ENCODE measurements at regions of chr5 and their contacts with region 1.

Region 1: GRCh38 chr5:72307968-72308852 is 11.8 kb downstream of the MRPS27 start:
- DNase-seq: peak; percentile 97
- ATAC-seq: peak; percentile 99
- H3K4me3 ChIP-seq: peak overlapping the region; percentile 58
- H3K27ac ChIP-seq: peak overlapping the region; percentile 58
- H3K4me1 ChIP-seq: no peaks in the 10 kb centered on the region; the same call in 1 of the 2 replicates
- H3K27me3 ChIP-seq: no peaks in the 10 kb centered on the region
- CTCF ChIP-seq: peak; percentile 95
- POLR2A ChIP-seq: peak; percentile 90
- RAD21 ChIP-seq: peak; percentile 90

Region 2: GRCh38 chr5:71586941-71587765 is 721.1 kb before region 1 on chr5 and contains the start of gene MCCC2:
- CTCF ChIA-PET with region 1: no interaction called
- POLR2A ChIA-PET with region 1: no interaction called
- dilution Hi-C with region 1: no loop called
- in situ Hi-C with region 1: loop called (anchors 25 kb)
- intact Hi-C with region 1: loop called (anchors 5 kb)
- DNase-seq: peak; percentile 92
- ATAC-seq: peak; percentile 100
- H3K4me3 ChIP-seq: peak within 1 kb of the TSS; percentile 76
- H3K27ac ChIP-seq: peak within 1 kb of the TSS; percentile 73
- H3K4me1 ChIP-seq: peaks cover 2% of the 10 kb centered on the region; the same call in 1 of the 2 replicates
- H3K27me3 ChIP-seq: no peaks in the 10 kb centered on the region
- CTCF ChIP-seq: no peak
- POLR2A ChIP-seq: peak; percentile 67; the same call in 1 of the 2 replicates
- RAD21 ChIP-seq: no peak
- total RNA-seq, gene MCCC2: 14.2 and 22.0 TPM in 2 replicates

Region 3: GRCh38 chr5:71939452-71940230 is 368.6 kb before region 1 on chr5:
- CTCF ChIA-PET with region 1: no interaction called
- POLR2A ChIA-PET with region 1: no interaction called
- dilution Hi-C with region 1: no loop called
- in situ Hi-C with region 1: no loop called
- intact Hi-C with region 1: loop called (anchors 10 kb)
- DNase-seq: no peak
- ATAC-seq: no peak
- H3K4me3 ChIP-seq: no peak overlapping the region
- H3K27ac ChIP-seq: no peak overlapping the region
- H3K4me1 ChIP-seq: no peaks in the 10 kb centered on the region
- H3K27me3 ChIP-seq: peaks cover 32% of the 10 kb centered on the region
- CTCF ChIP-seq: no peak
- POLR2A ChIP-seq: no peak
- RAD21 ChIP-seq: no peak

Region 4: DNA sequence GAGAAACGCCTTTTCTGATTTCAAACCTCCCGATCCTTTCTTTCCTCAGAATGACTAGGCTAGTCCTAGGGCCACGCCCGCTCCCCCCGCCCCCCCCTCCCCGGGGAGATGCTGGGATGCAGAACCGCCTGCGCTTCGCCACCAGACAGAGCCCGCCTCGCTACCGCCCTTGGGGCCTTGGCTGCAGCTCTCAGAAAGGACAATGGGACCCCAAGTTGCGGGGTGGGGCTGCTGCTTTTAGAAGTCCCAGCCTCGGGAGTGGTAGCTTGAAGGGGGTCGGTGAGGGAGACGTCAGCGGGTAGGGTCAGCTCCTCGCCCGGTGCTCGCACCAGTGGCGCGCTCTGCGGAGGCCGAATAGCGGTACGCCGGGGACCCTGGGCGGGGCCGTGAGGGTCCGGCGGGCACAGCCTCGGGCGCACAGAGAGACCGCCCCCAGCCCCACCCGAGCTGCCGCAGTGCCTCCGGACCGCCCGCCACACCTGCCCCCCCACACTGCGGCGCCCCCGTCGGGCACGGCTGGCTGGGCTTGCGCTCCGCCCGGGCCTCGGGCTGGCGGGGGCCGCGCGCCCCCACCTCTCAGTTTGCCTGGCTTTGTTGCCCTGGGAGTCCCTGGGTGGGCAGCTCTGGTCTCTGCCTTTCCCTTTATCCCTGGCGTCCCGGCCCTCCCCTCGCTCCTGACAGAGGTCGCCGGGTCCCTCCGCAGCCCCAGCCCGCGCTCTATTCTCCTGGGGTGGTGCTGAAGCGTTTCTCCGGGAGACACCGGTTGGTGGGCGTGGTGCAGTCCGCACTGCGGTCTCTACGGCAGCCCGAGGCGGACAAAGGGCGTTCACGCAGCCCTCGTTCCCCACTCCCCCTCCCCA is 199.8 kb before region 1 on chr5:
- CTCF ChIA-PET with region 1: no interaction called
- POLR2A ChIA-PET with region 1: interaction called, 5 read pairs
- dilution Hi-C with region 1: no loop called
- in situ Hi-C with region 1: no loop called
- intact Hi-C with region 1: loop called (anchors 1 kb)
- DNase-seq: peak; percentile 67
- ATAC-seq: peak; percentile 75
- H3K4me3 ChIP-seq: peak overlapping the region; percentile 97
- H3K27ac ChIP-seq: peak overlapping the region; percentile 86
- H3K4me1 ChIP-seq: peaks cover 12% of the 10 kb centered on the region
- H3K27me3 ChIP-seq: no peaks in the 10 kb centered on the region
- CTCF ChIP-seq: no peak
- POLR2A ChIP-seq: no peak
- RAD21 ChIP-seq: peak; percentile 28; the same call in 1 of the 2 replicates

Region 5: GRCh38 chr5:72244862-72245371 is 63.3 kb before region 1 on chr5:
- CTCF ChIA-PET with region 1: interaction called, 3 read pairs
- POLR2A ChIA-PET with region 1: no interaction called
- dilution Hi-C with region 1: no loop called
- in situ Hi-C with region 1: no loop called
- intact Hi-C with region 1: loop called (anchors 5 kb)
- DNase-seq: peak; percentile 61
- ATAC-seq: peak; percentile 77
- H3K4me3 ChIP-seq: no peak overlapping the region
- H3K27ac ChIP-seq: no peak overlapping the region
- H3K4me1 ChIP-seq: peaks cover 14% of the 10 kb centered on the region; the same call in 1 of the 2 replicates
- H3K27me3 ChIP-seq: no peaks in the 10 kb centered on the region
- CTCF ChIP-seq: peak; percentile 47
- POLR2A ChIP-seq: no peak
- RAD21 ChIP-seq: peak; percentile 54

Region 6: DNA sequence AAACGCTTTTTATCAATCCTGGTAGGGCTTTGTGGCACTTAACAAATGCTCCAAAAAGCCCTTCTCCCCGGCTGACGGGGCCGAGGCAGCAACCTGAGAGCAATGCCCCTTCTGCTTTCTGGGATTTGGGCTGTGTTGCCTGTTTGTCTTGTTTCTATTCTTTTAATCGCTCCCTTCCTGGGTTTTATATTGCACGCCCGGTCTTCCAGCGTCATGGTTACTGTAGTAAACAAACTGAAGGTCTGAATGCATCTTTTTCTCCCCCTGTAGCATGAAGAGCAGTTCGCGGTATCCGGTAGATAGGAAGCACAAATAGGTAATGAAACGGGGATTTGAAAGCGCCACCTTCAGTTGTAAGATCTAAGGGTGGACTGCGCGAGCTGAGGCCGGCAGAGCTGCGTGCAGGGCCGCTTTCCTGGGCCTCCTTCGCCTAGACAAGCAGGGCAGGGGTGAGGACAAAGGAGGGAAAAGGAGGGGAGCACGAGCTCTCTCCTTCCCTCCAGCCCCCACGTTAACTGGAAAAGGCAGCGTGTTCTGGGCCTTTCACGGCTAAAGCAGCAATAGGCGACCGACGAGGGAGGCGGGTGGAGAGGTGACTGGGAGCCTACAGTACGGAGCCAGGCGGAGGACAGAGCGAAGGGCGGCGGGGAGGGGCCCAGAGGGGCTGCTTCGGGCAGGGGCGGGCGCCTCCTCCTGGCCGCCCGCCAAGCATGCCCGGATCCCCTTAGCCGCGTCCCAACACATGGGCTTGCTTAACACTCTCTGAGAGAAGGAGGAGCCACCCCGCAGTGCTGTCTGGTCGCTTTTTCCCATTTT is 248.3 kb after region 1 on chr5:
- CTCF ChIA-PET with region 1: no interaction called
- POLR2A ChIA-PET with region 1: no interaction called
- dilution Hi-C with region 1: no loop called
- in situ Hi-C with region 1: no loop called
- intact Hi-C with region 1: no loop called
- DNase-seq: peak; percentile 56
- ATAC-seq: peak; percentile 79
- H3K4me3 ChIP-seq: peak overlapping the region; percentile 29
- H3K27ac ChIP-seq: peak overlapping the region; percentile 56
- H3K4me1 ChIP-seq: peaks cover 21% of the 10 kb centered on the region
- H3K27me3 ChIP-seq: no peaks in the 10 kb centered on the region
- CTCF ChIP-seq: 0 out of 2 replicates have a peak, but pooled peaks have one; percentile 14
- POLR2A ChIP-seq: no peak
- RAD21 ChIP-seq: no peak; the same call in 1 of the 2 replicates

Region 7: GRCh38 chr5:72723581-72723980 is 415.4 kb after region 1 on chr5:
- CTCF ChIA-PET with region 1: no interaction called
- POLR2A ChIA-PET with region 1: no interaction called
- dilution Hi-C with region 1: no loop called
- in situ Hi-C with region 1: no loop called
- intact Hi-C with region 1: no loop called
- DNase-seq: no peak
- ATAC-seq: no peak
- H3K4me3 ChIP-seq: no peak overlapping the region
- H3K27ac ChIP-seq: no peak overlapping the region
- H3K4me1 ChIP-seq: no peaks in the 10 kb centered on the region; the same call in 1 of the 2 replicates
- H3K27me3 ChIP-seq: peaks cover 3% of the 10 kb centered on the region; the same call in 1 of the 2 replicates
- CTCF ChIP-seq: no peak
- POLR2A ChIP-seq: no peak
- RAD21 ChIP-seq: no peak